AG04450 (cell line): ENCODE measurements at regions of chr5 and their contacts with region 1.

Region 1: GRCh38 chr5:151758430-151759241 is at the start of gene ATOX1:
- DNase-seq: peak; percentile 62
- H3K4me3 ChIP-seq: peak within 1 kb of the TSS; percentile 88
- H3K27ac ChIP-seq: peak within 1 kb of the TSS; percentile 68
- H3K27me3 ChIP-seq: no peaks in the 10 kb centered on the region
- CTCF ChIP-seq: no peak; the same call in 1 of the 2 replicates
- polyA plus RNA-seq, gene ATOX1: 138 and 164 TPM in 2 replicates

Region 2: GRCh38 chr5:151771259-151772028 is 12.8 kb after region 1 on chr5 and contains the start of gene G3BP1:
- CTCF ChIA-PET with region 1: interaction called, 9 read pairs
- POLR2A ChIA-PET with region 1: interaction called, 21 read pairs
- DNase-seq: peak; percentile 100
- H3K4me3 ChIP-seq: peak within 1 kb of the TSS; percentile 91
- H3K27ac ChIP-seq: peak within 1 kb of the TSS; percentile 95
- H3K27me3 ChIP-seq: no peaks in the 10 kb centered on the region
- CTCF ChIP-seq: peak; percentile 68
- polyA plus RNA-seq, gene G3BP1: 87.7 and 101 TPM in 2 replicates

Region 3: DNA sequence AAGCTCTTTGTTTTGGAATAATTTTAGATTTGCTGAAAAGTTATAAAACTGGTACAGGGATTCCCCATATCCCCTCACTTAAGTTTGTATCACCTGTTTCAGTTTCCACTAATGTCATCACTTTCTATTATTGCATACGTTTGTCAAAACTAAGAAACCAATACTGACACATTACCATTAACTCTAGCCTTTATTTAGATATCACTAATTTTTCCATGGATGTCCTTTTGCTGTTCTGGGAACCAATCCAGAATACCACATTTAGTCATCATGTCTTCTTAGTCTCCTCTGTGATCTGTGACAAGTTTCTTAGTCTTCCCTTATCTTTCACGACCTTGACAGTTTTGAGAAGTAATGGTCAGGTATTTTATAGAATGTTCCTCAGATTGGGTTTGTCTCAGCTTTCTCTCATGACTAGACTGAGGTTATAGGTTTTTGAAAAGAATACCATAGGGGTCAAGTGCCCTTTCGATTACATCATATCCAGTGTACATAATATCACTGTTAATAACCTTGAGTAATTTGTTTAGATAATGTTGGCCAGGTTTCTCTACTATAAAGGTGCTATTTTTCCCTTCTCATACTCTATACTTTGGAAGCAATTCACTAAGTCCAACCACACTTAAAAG is 698.3 kb after region 1 on chr5:
- CTCF ChIA-PET with region 1: no interaction called
- POLR2A ChIA-PET with region 1: no interaction called
- DNase-seq: no peak
- H3K4me3 ChIP-seq: no peak overlapping the region
- H3K27ac ChIP-seq: no peak overlapping the region
- H3K27me3 ChIP-seq: no peaks in the 10 kb centered on the region
- CTCF ChIP-seq: no peak